B cell (primary cell): ENCODE measurements at regions of chr1 and their contacts with region 1.

Region 1: GRCh38 chr1:181142096-181142958 is 53.8 kb downstream of the IER5 start:
- DNase-seq: peak; percentile 89
- ATAC-seq: peak; percentile 97
- H3K4me3 ChIP-seq: no peak overlapping the region
- H3K4me3 Mint-ChIP-seq: peak overlapping the region; percentile 69
- H3K27ac ChIP-seq: no peak overlapping the region
- H3K27ac Mint-ChIP-seq: peak overlapping the region; percentile 60
- H3K4me1 ChIP-seq: peaks cover 36 to 41% of the 10 kb centered on the region in 2 donors
- H3K4me1 Mint-ChIP-seq: peaks cover 51% of the 10 kb centered on the region
- H3K27me3 ChIP-seq: no peaks in the 10 kb centered on the region
- H3K27me3 Mint-ChIP-seq: no peaks in the 10 kb centered on the region
- CTCF ChIP-seq: peak; percentile 96

Region 2: DNA sequence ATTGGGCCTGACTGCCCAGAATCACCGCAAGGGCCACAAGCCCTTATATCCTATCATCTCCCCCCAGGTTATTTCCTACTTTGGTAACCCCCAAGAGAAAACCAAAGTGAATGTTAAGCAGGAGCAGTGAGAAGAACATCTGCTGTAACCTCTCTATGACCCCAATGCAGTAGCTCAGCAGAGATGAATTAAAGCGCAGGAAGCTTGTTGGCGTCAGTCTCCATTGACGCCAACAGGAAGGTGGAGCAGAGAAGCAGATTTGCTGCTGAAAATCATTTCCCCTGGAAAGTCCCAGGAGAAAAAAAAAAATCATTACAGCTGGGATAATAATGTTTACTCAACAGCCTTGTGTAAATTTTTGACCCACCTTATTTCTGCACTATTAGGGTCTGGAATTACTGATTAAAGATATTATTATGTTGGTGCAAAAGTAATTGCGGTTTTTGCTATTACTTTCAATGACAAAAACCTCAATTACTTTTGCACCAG is 1432.4 kb before region 1 on chr1:
- CTCF ChIA-PET with region 1: no interaction called
- POLR2A ChIA-PET with region 1: no interaction called
- intact Hi-C with region 1: no loop called
- DNase-seq: peak; percentile 13
- ATAC-seq: no peak
- H3K4me3 ChIP-seq: no peak overlapping the region
- H3K4me3 Mint-ChIP-seq: no peak overlapping the region
- H3K27ac ChIP-seq: no peak overlapping the region
- H3K27ac Mint-ChIP-seq: no peak overlapping the region
- H3K4me1 ChIP-seq: no peaks in the 10 kb centered on the region
- H3K4me1 Mint-ChIP-seq: peaks cover 3% of the 10 kb centered on the region
- H3K27me3 ChIP-seq: peaks cover 0 to 3% (median 0%) of the 10 kb centered on the region in 4 experiments
- H3K27me3 Mint-ChIP-seq: peaks cover 29% of the 10 kb centered on the region
- CTCF ChIP-seq: no peak

Region 3: DNA sequence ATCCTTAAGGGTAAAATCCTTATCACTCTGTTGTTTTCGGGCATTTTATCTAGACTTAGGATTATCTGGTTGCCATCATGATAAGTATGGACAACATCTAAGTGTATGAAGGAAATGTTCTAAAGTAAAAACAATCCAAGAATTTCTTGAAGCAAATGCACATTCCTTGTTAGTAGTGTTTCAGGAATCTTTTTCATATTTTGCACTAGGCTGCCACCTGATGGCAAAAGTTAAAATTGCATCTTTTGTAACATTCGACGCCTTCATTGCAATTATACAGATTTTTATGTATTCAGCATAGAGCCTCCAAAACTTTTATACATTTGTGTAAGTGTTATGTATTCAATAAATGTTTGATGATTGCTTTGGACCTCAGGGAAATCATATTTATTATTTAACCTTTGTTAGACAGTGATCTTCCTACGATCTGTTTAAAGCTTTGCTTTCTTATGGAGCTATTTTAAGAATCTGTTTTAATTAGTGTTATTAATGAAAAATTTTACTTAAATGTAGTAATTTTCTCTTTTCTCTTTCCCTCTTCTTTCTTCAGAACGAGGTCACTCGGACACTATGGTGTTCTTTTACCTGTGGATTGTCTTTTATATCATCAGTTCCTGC is 279.1 kb before region 1 on chr1:
- CTCF ChIA-PET with region 1: interaction called, 10 read pairs
- POLR2A ChIA-PET with region 1: no interaction called
- intact Hi-C with region 1: no loop called
- DNase-seq: peak; percentile 64
- ATAC-seq: no peak
- H3K4me3 ChIP-seq: no peak overlapping the region
- H3K4me3 Mint-ChIP-seq: no peak overlapping the region
- H3K27ac ChIP-seq: no peak overlapping the region
- H3K27ac Mint-ChIP-seq: no peak overlapping the region
- H3K4me1 ChIP-seq: no peaks in the 10 kb centered on the region
- H3K4me1 Mint-ChIP-seq: no peaks in the 10 kb centered on the region
- H3K27me3 ChIP-seq: no peaks in the 10 kb centered on the region
- H3K27me3 Mint-ChIP-seq: no peaks in the 10 kb centered on the region
- CTCF ChIP-seq: peak; percentile 90

Region 4: DNA sequence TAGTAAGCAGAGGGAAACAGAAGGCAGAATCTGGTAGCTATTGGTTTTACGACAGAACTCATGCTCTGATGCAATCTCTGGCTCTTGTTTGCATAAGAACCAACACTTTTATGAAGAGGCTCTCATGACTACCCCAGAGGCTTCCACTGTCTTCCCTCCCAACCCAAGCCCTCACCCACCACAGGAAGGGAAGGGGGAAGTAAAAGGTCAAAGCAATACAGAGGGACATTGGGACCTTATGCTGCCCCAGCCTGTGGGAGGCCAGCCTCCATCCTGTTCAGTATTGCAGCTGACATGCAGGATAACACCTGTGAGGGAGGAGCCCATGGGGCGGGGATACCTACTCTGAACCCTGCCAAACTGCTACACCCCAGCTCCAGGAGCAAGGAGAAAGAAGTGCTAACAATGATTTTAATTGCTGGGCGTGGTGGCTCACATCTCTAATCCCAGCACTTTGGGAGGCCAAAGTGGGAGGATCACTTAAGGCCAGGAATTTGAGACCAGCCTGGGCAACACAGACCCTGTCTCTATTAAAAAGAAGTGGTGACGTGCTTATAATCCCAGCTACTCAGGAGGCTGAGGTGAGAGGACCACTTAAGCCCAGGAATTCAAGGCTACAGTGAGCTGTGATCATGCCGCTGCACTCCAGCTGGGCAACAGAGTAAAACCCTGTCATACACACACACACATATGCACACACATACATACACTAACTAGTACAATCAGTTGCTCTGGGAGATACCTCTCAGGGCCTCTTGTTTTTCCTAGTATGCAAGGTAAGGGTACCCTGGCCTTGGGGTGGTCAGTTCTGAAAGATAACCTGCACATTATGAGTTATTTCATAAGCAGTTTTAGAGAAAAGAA is 99.1 kb before region 1 on chr1:
- CTCF ChIA-PET with region 1: interaction called, 119 read pairs
- POLR2A ChIA-PET with region 1: no interaction called
- intact Hi-C with region 1: loop called (anchors 1 kb)
- DNase-seq: no peak
- ATAC-seq: no peak
- H3K4me3 ChIP-seq: no peak overlapping the region
- H3K4me3 Mint-ChIP-seq: no peak overlapping the region
- H3K27ac ChIP-seq: no peak overlapping the region
- H3K27ac Mint-ChIP-seq: no peak overlapping the region
- H3K4me1 ChIP-seq: peaks cover 0 to 7% of the 10 kb centered on the region in 2 donors
- H3K4me1 Mint-ChIP-seq: peaks cover 34% of the 10 kb centered on the region
- H3K27me3 ChIP-seq: no peaks in the 10 kb centered on the region
- H3K27me3 Mint-ChIP-seq: no peaks in the 10 kb centered on the region
- CTCF ChIP-seq: no peak

Region 5: GRCh38 chr1:181099152-181100014 is 42.9 kb before region 1 on chr1:
- CTCF ChIA-PET with region 1: interaction called, 125 read pairs
- POLR2A ChIA-PET with region 1: interaction called, 9 read pairs
- intact Hi-C with region 1: no loop called
- DNase-seq: no peak
- ATAC-seq: no peak
- H3K4me3 ChIP-seq: no peak overlapping the region
- H3K4me3 Mint-ChIP-seq: peak overlapping the region; percentile 28
- H3K27ac ChIP-seq: no peak overlapping the region
- H3K27ac Mint-ChIP-seq: peak overlapping the region; percentile 11
- H3K4me1 ChIP-seq: peaks cover 24 to 26% of the 10 kb centered on the region in 2 donors
- H3K4me1 Mint-ChIP-seq: peaks cover 53% of the 10 kb centered on the region
- H3K27me3 ChIP-seq: no peaks in the 10 kb centered on the region
- H3K27me3 Mint-ChIP-seq: no peaks in the 10 kb centered on the region
- CTCF ChIP-seq: no peak

Region 6: GRCh38 chr1:181128592-181129497 is 13.5 kb before region 1 on chr1:
- CTCF ChIA-PET with region 1: interaction called, 30 read pairs
- POLR2A ChIA-PET with region 1: interaction called, 6 read pairs
- intact Hi-C with region 1: loop called (anchors 1 kb)
- DNase-seq: peak; percentile 82
- ATAC-seq: peak; percentile 73
- H3K4me3 ChIP-seq: peak overlapping the region; percentile 18 to 66 (median 50)
- H3K4me3 Mint-ChIP-seq: peak overlapping the region; percentile 92
- H3K27ac ChIP-seq: peak overlapping the region; percentile 86 to 91
- H3K27ac Mint-ChIP-seq: peak overlapping the region; percentile 93
- H3K4me1 ChIP-seq: peaks cover 79 to 85% of the 10 kb centered on the region in 2 donors
- H3K4me1 Mint-ChIP-seq: peaks cover 84% of the 10 kb centered on the region
- H3K27me3 ChIP-seq: no peaks in the 10 kb centered on the region
- H3K27me3 Mint-ChIP-seq: no peaks in the 10 kb centered on the region
- CTCF ChIP-seq: no peak

Region 7: GRCh38 chr1:181166377-181167196 is 24.3 kb after region 1 on chr1:
- CTCF ChIA-PET with region 1: interaction called, 72 read pairs
- POLR2A ChIA-PET with region 1: no interaction called
- intact Hi-C with region 1: loop called (anchors 1 kb)
- DNase-seq: peak; percentile 82
- ATAC-seq: peak; percentile 99
- H3K4me3 ChIP-seq: no peak overlapping the region
- H3K4me3 Mint-ChIP-seq: no peak overlapping the region
- H3K27ac ChIP-seq: no peak overlapping the region
- H3K27ac Mint-ChIP-seq: no peak overlapping the region
- H3K4me1 ChIP-seq: peaks cover 2 to 6% of the 10 kb centered on the region in 2 donors
- H3K4me1 Mint-ChIP-seq: peaks cover 3% of the 10 kb centered on the region
- H3K27me3 ChIP-seq: peaks cover 0 to 2% (median 0%) of the 10 kb centered on the region in 4 experiments
- H3K27me3 Mint-ChIP-seq: no peaks in the 10 kb centered on the region
- CTCF ChIP-seq: peak; percentile 94

Region 8: DNA sequence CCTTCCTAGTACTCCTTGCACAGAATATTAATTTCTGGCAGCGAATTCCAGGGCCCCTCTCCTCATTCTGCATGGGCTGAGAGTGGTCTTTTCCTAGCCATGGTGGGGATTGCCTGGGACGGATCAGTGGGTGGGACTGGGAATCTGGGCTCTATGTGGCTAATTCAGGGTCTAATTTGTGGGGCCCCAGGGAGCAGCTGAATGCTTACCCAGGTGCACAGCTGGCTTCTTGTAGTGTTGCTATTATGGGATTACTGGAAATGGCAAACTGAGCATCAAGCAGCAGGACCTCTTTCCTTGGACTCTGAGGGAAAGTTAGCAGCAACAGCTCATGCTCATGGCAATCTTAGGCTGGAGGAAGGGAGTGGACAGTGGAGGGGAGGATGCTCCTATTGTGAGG is 153.9 kb after region 1 on chr1:
- CTCF ChIA-PET with region 1: no interaction called
- POLR2A ChIA-PET with region 1: no interaction called
- intact Hi-C with region 1: no loop called
- DNase-seq: no peak
- ATAC-seq: no peak
- H3K4me3 ChIP-seq: no peak overlapping the region
- H3K4me3 Mint-ChIP-seq: no peak overlapping the region
- H3K27ac ChIP-seq: no peak overlapping the region
- H3K27ac Mint-ChIP-seq: no peak overlapping the region
- H3K4me1 ChIP-seq: no peaks in the 10 kb centered on the region
- H3K4me1 Mint-ChIP-seq: no peaks in the 10 kb centered on the region
- H3K27me3 ChIP-seq: no peaks in the 10 kb centered on the region
- H3K27me3 Mint-ChIP-seq: peaks cover 26% of the 10 kb centered on the region
- CTCF ChIP-seq: no peak